ENCODE measurements at regions of chr5 and their contacts with region 1.

Region 1: DNA sequence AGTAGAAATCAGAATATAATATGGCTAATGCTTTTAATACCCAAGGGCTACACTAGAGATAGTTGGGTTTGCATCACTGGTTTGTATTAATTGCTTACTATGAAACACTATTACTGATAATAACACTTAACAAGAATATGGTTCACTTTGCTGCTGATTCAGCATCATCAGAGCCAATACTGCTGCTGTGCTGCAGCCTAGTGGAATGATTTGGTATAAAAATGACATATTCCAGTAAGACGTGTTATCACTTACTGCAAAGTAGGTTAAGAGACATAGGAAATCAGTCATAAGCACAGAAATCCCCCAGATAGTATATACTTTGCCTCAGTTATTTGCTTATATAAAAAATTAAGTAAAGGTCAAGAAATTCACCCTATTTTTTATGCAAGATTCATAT is 2.8 kb downstream of the CDH10 start:
- DNase-seq: peak in 1 of 2 experiments; percentile 15
- H3K4me3 ChIP-seq: no peak overlapping the region
- H3K27ac ChIP-seq: no peak overlapping the region
- H3K4me1 ChIP-seq: no peaks in the 10 kb centered on the region
- H3K27me3 ChIP-seq: no peaks in the 10 kb centered on the region
- CTCF ChIP-seq: peak; percentile 73

Region 2: DNA sequence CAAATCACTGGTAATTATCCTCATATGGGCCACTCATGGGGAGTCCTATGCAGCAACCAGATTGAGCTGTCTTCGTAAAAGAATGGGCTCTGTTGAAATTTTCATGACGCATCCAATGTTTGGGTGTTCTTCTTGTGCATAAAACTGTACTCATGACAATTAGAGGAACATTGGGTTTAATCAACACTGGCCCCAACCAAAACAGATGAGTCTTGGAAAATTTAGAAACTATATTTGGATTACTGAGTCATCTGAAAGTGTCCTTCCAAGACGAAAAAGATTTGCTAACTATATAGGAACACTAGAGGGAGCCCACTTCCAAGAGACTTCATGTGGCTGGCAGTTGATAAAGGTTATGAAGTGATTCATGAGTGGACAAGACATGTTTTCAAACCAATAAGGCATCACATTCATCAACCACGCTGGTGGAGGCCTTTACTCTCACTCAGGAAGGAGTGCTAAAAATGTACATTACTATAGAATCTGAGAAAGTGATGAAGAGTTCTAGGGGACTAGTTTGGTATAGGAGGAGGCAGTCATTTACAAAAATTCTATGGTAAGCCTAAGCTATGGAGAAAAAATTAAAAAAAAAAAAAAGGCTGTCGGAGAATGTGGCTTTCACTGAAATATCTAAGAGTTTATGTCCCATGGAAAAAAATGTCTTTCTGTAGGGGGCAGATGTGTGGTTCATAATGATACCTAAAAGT is 821.1 kb before region 1 on chr5:
- CTCF ChIA-PET with region 1: no interaction called
- POLR2A ChIA-PET with region 1: no interaction called
- intact Hi-C with region 1: loop called (anchors 5 kb)
- DNase-seq: no peak
- H3K4me3 ChIP-seq: no peak overlapping the region
- H3K27ac ChIP-seq: no peak overlapping the region
- H3K4me1 ChIP-seq: no peaks in the 10 kb centered on the region
- H3K27me3 ChIP-seq: no peaks in the 10 kb centered on the region
- CTCF ChIP-seq: peak; percentile 73

Region 3: GRCh38 chr5:24005384-24005783 is 636.6 kb before region 1 on chr5:
- CTCF ChIA-PET with region 1: no interaction called
- POLR2A ChIA-PET with region 1: no interaction called
- intact Hi-C with region 1: loop called (anchors 10 kb)
- DNase-seq: no peak
- H3K4me3 ChIP-seq: no peak overlapping the region
- H3K27ac ChIP-seq: no peak overlapping the region
- H3K4me1 ChIP-seq: no peaks in the 10 kb centered on the region
- H3K27me3 ChIP-seq: no peaks in the 10 kb centered on the region
- CTCF ChIP-seq: 0 out of 2 replicates have a peak, but pooled peaks have one; percentile 20

Region 4: DNA sequence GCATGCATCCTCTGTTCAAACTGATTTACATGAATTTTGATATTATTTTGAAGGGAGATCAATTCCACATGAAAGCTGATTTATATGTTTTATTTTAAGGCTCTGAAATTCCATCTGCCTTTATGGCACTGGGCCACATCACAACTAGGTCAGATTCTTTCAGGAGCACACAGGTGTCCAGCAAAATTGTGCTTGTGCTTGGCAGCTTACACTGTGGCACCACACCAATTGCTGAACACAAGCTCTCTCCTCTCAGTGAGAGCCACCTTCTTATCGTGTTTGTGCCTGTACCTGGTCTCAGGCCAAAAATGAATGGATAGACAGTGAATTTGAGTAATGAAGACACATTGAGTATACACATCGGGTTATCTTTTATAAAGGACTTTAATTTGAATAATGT is 197.6 kb before region 1 on chr5:
- CTCF ChIA-PET with region 1: interaction called, 3 read pairs
- POLR2A ChIA-PET with region 1: no interaction called
- intact Hi-C with region 1: loop called (anchors 2 kb)
- DNase-seq: no peak
- H3K4me3 ChIP-seq: no peak overlapping the region
- H3K27ac ChIP-seq: no peak overlapping the region
- H3K4me1 ChIP-seq: no peaks in the 10 kb centered on the region
- H3K27me3 ChIP-seq: no peaks in the 10 kb centered on the region
- CTCF ChIP-seq: no peak

Region 5: GRCh38 chr5:24555229-24555628 is 86.8 kb before region 1 on chr5:
- CTCF ChIA-PET with region 1: no interaction called
- POLR2A ChIA-PET with region 1: no interaction called
- intact Hi-C with region 1: no loop called
- DNase-seq: no peak
- H3K4me3 ChIP-seq: no peak overlapping the region
- H3K27ac ChIP-seq: no peak overlapping the region
- H3K4me1 ChIP-seq: no peaks in the 10 kb centered on the region
- H3K27me3 ChIP-seq: no peaks in the 10 kb centered on the region
- CTCF ChIP-seq: no peak

Region 6: DNA sequence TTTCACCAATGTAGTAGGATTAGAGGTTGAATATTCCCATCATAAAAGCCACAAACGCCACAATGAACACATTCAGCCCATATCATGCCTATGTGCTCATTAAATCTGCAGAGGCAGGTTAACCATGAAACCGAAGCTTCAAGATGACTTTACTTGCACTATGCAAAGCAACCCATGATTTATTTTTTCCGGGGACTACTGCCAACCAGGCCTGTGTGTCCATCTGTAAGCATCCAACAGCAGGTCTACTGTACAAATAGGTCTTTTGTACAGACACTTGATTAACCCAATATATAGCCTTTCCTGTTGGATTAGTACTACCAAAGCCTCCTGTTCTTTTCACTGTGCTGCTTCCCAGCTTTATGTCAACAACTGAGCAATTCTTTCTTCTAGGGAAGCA is 107.7 kb after region 1 on chr5:
- CTCF ChIA-PET with region 1: no interaction called
- POLR2A ChIA-PET with region 1: interaction called, 10 read pairs
- intact Hi-C with region 1: no loop called
- DNase-seq: no peak
- H3K4me3 ChIP-seq: no peak overlapping the region
- H3K27ac ChIP-seq: no peak overlapping the region
- H3K4me1 ChIP-seq: no peaks in the 10 kb centered on the region
- H3K27me3 ChIP-seq: no peaks in the 10 kb centered on the region
- CTCF ChIP-seq: no peak

Region 7: DNA sequence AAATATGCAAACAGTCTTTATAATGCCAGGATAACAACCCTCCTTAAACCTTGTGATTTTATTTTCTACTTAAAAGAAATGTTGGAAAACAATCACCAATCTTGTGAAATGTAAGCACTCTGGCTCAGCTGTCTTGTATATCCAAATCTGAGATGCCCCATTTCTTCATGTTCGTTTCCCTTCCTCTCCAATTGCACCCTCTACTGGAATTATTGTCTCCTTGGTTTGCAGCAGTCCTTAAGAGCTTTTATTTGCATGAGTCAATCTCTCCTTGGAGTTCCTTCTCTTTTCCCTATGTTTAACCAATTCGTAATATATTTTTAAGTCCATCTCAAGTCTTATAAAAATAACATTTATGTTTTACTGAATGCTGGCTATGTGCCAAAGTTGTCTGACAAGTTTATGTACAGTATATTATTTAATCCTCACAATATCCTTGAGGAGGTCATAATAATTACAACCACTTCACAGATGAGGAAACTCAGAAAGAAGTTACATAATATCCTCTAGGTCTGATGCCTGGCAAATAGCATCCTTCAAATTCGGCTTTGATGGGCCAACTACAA is 364.8 kb after region 1 on chr5:
- CTCF ChIA-PET with region 1: interaction called, 19 read pairs
- POLR2A ChIA-PET with region 1: no interaction called
- intact Hi-C with region 1: no loop called
- DNase-seq: peak; percentile 5 to 59
- H3K4me3 ChIP-seq: no peak overlapping the region
- H3K27ac ChIP-seq: no peak overlapping the region
- H3K4me1 ChIP-seq: no peaks in the 10 kb centered on the region
- H3K27me3 ChIP-seq: no peaks in the 10 kb centered on the region
- CTCF ChIP-seq: peak; percentile 57